ENCODE measurements at regions of chr1 and their contacts with region 1.

Region 1: DNA sequence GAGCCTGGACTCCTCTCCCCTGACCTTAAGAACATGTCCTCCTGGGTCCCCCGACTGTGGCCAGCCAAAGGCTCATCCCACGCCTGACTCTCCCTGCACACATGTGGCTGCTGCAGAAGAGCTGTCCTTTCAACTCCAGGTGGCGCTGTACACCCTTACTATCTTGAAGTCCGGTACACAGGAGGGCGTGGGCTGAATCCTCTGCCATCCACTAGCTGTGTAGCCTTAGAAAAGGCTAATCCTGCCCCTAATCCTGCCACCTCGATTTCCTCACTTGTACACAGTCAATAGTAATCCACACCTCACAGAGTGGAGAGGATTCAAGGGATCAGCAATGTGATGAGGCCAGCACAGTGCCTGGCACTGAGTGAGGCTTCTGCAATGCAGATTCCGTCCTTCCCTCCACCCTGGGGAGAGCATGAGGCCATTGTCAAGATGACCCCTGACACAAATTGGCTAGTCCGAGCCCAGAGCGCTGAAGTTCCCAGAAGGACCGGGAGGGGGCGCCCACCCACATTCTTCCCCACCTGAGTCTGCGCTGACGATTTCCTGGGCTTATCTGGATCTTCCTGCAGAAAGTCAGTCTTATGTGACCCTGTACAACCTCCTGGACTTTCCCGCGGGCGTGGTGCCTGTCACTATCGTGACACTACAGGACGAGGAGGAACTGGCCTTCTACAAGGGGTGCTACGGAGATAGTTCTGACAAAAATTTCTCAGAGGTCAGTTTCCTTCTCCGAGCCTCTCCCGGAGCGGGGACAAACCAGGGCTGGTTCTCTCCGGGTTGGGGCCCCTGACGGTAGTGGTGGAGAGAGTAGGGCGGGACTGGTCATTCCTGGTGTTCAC is 47.1 kb upstream of the DMBX1 start:
- DNase-seq: peak; percentile 83
- H3K4me3 Mint-ChIP-seq: peak overlapping the region; percentile 78
- H3K27ac Mint-ChIP-seq: peak overlapping the region; percentile 72
- H3K4me1 Mint-ChIP-seq: peaks cover 14% of the 10 kb centered on the region
- H3K27me3 Mint-ChIP-seq: peaks cover 18% of the 10 kb centered on the region

Region 2: DNA sequence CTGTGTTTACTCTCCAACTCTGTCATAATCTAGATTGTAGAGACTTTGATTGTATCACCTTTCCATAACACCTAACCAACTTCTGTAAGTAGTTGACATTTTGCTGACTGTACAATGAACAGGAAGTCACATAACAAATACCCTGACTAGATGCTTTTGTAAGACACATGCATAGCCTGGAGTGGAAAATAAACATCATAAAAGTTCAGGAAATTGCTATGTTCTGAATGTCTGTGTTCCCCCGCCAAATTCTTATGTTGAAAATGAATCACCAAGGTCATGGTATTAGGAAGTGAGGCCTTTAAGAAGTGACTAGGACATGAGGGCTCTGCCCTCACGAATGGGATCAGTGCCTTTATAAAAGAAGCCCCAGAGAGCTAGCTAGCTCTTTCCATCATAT is 1195.8 kb before region 1 on chr1:
- CTCF ChIA-PET with region 1: no interaction called
- POLR2A ChIA-PET with region 1: no interaction called
- intact Hi-C with region 1: no loop called
- DNase-seq: peak; percentile 11
- H3K4me3 Mint-ChIP-seq: no peak overlapping the region
- H3K27ac Mint-ChIP-seq: peak overlapping the region; percentile 88
- H3K4me1 Mint-ChIP-seq: peaks cover 15% of the 10 kb centered on the region
- H3K27me3 Mint-ChIP-seq: peaks cover 5% of the 10 kb centered on the region

Region 3: DNA sequence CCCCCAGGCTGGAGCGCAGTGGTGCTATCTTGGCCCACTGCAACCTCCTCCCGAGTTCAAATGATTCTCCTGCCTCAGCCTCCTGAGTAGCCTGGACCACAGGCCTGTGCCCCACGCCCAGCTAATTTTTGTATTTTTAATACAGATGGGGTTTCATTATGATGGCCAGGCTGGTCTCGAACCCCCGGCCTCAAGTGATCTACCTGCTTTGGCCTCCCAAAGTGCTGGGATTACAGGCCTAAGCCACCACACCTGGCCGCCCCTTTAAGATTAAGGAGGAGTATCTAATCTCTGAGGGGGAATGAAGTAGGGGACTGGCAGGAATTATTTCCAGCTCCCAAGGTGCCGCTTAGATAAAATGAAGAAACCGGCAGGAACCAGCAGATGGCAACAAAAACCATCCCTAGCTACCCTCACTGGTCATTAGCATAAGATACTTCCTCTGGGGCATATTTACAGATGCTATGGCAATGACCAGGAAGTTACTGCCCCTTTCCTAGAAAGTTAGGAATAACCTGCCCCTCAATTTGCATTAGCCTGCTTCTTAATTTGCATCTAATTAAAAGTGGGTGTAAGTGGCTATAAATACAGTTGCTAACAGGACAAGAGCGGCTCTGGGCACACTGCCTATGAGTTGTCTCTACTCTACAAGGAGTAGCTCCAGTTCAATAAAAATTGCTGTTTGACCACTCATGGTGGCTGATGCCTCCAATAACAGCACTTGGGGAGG is 109.1 kb before region 1 on chr1:
- CTCF ChIA-PET with region 1: no interaction called
- POLR2A ChIA-PET with region 1: no interaction called
- intact Hi-C with region 1: no loop called
- DNase-seq: no peak
- H3K4me3 Mint-ChIP-seq: no peak overlapping the region
- H3K27ac Mint-ChIP-seq: no peak overlapping the region
- H3K4me1 Mint-ChIP-seq: no peaks in the 10 kb centered on the region
- H3K27me3 Mint-ChIP-seq: no peaks in the 10 kb centered on the region

Region 4: GRCh38 chr1:46406881-46407608 is 35.5 kb before region 1 on chr1:
- CTCF ChIA-PET with region 1: interaction called, 8 read pairs
- POLR2A ChIA-PET with region 1: no interaction called
- intact Hi-C with region 1: loop called (anchors 2 kb)
- DNase-seq: no peak
- H3K4me3 Mint-ChIP-seq: no peak overlapping the region
- H3K27ac Mint-ChIP-seq: no peak overlapping the region
- H3K4me1 Mint-ChIP-seq: peaks cover 5% of the 10 kb centered on the region
- H3K27me3 Mint-ChIP-seq: no peaks in the 10 kb centered on the region

Region 5: GRCh38 chr1:46477153-46477929 is 34.8 kb after region 1 on chr1:
- CTCF ChIA-PET with region 1: interaction called, 12 read pairs
- POLR2A ChIA-PET with region 1: no interaction called
- intact Hi-C with region 1: no loop called
- DNase-seq: peak; percentile 88
- H3K4me3 Mint-ChIP-seq: no peak overlapping the region
- H3K27ac Mint-ChIP-seq: no peak overlapping the region
- H3K4me1 Mint-ChIP-seq: no peaks in the 10 kb centered on the region
- H3K27me3 Mint-ChIP-seq: peaks cover 24% of the 10 kb centered on the region

Region 6: GRCh38 chr1:46522184-46522968 is 79.8 kb after region 1 on chr1:
- CTCF ChIA-PET with region 1: interaction called, 250 read pairs
- POLR2A ChIA-PET with region 1: interaction called, 4 read pairs
- intact Hi-C with region 1: no loop called
- DNase-seq: peak; percentile 74
- H3K4me3 Mint-ChIP-seq: peak overlapping the region; percentile 38
- H3K27ac Mint-ChIP-seq: peak overlapping the region; percentile 82
- H3K4me1 Mint-ChIP-seq: peaks cover 14% of the 10 kb centered on the region
- H3K27me3 Mint-ChIP-seq: peaks cover 25% of the 10 kb centered on the region

Region 7: DNA sequence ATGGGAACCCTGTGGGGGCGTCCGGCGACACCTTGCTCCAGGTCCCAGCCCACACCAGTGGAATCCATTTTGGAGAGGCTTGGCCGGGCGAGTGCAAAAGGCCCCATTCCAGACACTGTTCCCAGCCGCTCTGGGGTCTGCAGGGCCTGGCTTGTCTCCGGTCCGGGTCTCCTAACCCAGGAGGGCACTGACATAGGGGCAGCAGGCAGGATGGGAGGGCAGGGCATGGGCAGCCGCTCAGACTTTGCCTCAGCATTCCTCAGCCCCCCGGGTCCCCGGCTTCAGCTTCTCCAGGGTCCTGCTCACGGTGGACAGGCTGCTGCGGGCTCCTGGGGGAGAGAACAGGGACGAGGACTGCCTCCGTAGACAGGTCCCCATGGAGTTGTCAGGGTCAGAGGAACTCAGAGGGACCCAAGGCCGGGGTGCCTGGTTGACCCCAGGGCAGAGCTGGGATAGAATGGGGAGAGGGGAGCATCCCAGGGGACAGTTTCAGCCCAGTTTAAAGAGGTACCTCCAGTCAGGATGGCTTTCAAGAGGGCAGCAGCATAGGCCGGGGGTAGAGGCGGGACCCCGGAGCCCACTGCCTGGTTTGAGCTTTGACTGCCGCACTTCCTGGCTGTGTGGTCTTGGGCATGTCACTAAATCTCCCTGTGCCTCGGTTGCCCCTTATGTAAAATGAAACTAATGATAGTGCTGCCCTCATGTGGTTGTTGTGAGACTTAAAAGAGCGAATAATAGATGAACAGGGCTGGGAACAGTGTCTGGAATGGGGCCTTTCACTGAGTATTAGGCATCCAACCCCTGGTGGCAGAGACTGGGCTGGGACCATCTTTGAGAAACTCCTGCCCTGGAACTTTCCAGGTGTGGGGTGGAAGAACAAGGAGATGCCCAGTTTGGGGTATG is 105.2 kb after region 1 on chr1:
- CTCF ChIA-PET with region 1: interaction called, 20 read pairs
- POLR2A ChIA-PET with region 1: no interaction called
- intact Hi-C with region 1: no loop called
- DNase-seq: no peak
- H3K4me3 Mint-ChIP-seq: no peak overlapping the region
- H3K27ac Mint-ChIP-seq: no peak overlapping the region
- H3K4me1 Mint-ChIP-seq: peaks cover 11% of the 10 kb centered on the region
- H3K27me3 Mint-ChIP-seq: peaks cover 35% of the 10 kb centered on the region

Region 8: GRCh38 chr1:46724991-46725735 is 282.6 kb after region 1 on chr1:
- CTCF ChIA-PET with region 1: interaction called, 12 read pairs
- POLR2A ChIA-PET with region 1: no interaction called
- intact Hi-C with region 1: loop called (anchors 1 kb)
- DNase-seq: peak; percentile 79
- H3K4me3 Mint-ChIP-seq: no peak overlapping the region
- H3K27ac Mint-ChIP-seq: no peak overlapping the region
- H3K4me1 Mint-ChIP-seq: no peaks in the 10 kb centered on the region
- H3K27me3 Mint-ChIP-seq: peaks cover 31% of the 10 kb centered on the region

Region 9: DNA sequence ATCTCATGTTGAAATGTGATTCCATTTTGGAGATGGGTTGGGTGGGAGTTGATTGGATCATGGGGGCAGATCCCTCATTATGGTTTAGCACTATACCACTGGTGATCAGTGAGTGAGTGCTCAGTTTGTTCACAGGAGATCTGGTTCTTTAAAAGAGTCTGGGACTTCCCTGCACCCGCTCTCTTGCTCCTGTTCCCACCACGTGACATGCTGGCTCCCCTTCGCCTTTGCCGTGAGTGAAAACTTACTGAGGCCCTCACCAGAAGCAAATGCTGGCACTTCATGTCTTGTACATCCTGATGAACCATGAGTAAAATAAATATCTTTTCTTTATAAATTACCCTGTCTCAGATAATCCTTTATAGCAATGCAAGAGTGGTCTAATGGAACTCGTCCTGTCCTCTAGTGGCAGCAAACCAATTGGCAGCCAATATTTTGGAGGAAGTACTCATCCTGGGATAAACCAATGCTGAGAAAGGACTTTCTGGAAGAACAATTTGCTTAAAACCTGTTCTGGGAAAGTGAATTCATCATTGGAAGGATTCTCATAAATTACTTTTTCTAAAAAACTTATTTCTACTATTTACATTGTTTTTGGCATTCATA is 526.6 kb after region 1 on chr1:
- CTCF ChIA-PET with region 1: no interaction called
- POLR2A ChIA-PET with region 1: no interaction called
- intact Hi-C with region 1: no loop called
- DNase-seq: no peak
- H3K4me3 Mint-ChIP-seq: no peak overlapping the region
- H3K27ac Mint-ChIP-seq: no peak overlapping the region
- H3K4me1 Mint-ChIP-seq: no peaks in the 10 kb centered on the region
- H3K27me3 Mint-ChIP-seq: peaks cover 14% of the 10 kb centered on the region